IMR-90 (cell line): ENCODE measurements at regions of chr12 and their contacts with region 1.

Region 1: DNA sequence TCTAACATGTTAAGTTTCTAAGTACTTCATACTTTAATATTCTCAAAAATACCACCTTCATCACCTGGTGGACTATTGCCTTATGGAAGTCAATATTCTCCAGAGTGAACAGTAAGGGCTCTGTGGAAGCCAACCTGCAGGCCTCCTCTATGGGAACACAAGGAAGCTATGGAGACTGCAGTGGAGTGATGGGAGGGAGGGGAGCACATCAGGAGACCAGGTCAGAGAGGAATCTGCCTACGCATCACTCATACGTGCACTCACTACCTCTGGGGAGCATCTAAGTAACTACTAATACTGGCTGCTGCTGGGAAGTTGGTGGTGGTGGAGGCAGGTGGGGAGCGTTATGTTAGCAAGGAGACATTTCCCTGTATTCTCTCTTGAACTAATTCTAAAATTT is 19.9 kb downstream of the HECTD4 start:
- DNase-seq: no peak
- ATAC-seq: no peak
- H3K4me3 ChIP-seq: no peak overlapping the region
- H3K27ac ChIP-seq: no peak overlapping the region
- H3K4me1 ChIP-seq: no peaks in the 10 kb centered on the region; the same call in 1 of the 2 replicates
- H3K27me3 ChIP-seq: no peaks in the 10 kb centered on the region
- CTCF ChIP-seq: no peak
- POLR2A ChIP-seq: no peak
- RAD21 ChIP-seq: no peak

Region 2: DNA sequence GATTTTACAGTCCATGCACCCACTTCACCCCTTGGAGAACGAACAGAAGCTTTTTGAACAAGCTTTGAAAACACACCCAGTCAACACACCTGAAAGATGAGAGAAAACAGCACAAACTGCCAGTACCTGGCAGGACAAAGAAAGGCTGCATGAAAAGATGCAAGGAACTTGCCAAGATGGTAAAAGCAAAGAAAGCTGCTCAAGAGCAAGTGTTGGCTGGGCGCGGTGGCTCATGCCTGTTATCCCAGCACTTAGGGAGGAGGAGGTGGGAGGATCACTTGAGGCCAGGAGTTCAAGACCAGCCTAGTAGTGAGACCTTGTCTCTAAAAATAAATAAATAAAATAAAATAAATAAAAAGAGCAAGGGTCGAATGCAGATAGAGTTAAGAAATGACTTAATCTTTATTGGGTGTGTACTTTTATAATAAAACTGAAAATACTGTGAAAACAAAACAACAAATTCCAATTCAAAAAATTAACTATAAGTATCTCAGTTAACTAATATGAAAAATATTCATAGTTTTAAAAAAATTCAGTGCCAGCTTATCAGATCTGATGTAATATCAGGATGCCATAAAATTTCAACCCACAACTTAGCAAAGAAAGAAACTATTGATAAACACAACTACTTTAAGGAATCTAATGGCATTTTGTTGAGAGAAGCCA is 39.3 kb before region 1 on chr12:
- CTCF ChIA-PET with region 1: no interaction called
- POLR2A ChIA-PET with region 1: no interaction called
- dilution Hi-C with region 1: no loop called
- in situ Hi-C with region 1: no loop called
- intact Hi-C with region 1: loop called (anchors 5 kb)
- DNase-seq: no peak
- ATAC-seq: no peak
- H3K4me3 ChIP-seq: no peak overlapping the region
- H3K27ac ChIP-seq: no peak overlapping the region
- H3K4me1 ChIP-seq: peaks cover 2% of the 10 kb centered on the region
- H3K27me3 ChIP-seq: no peaks in the 10 kb centered on the region
- CTCF ChIP-seq: no peak
- POLR2A ChIP-seq: no peak
- RAD21 ChIP-seq: no peak

Region 3: GRCh38 chr12:112803620-112804282 is 441.4 kb after region 1 on chr12:
- CTCF ChIA-PET with region 1: no interaction called
- POLR2A ChIA-PET with region 1: no interaction called
- dilution Hi-C with region 1: no loop called
- in situ Hi-C with region 1: no loop called
- intact Hi-C with region 1: no loop called
- DNase-seq: no peak
- ATAC-seq: no peak
- H3K4me3 ChIP-seq: no peak overlapping the region
- H3K27ac ChIP-seq: no peak overlapping the region
- H3K4me1 ChIP-seq: no peaks in the 10 kb centered on the region
- H3K27me3 ChIP-seq: no peaks in the 10 kb centered on the region
- CTCF ChIP-seq: no peak
- POLR2A ChIP-seq: no peak
- RAD21 ChIP-seq: no peak